Activated CD4-positive, alpha-beta T cell treated with anti-CD3 and anti-CD28 coated beads, Interleukin-2, amount 10 ng/mL, durations not matched to agents 24 days and 14 days (primary cell): ENCODE measurements at regions of chr9 and their contacts with region 1.

Region 1: GRCh38 chr9:35829084-35829763 is at the start of gene TMEM8B:
- DNase-seq: peak; percentile 97
- H3K4me3 Mint-ChIP-seq: peak within 1 kb of the TSS; percentile 93
- H3K27ac Mint-ChIP-seq: peak within 1 kb of the TSS; percentile 86
- H3K4me1 Mint-ChIP-seq: peaks cover 29% of the 10 kb centered on the region
- H3K27me3 Mint-ChIP-seq: peaks cover 6% of the 10 kb centered on the region
- total RNA-seq, gene TMEM8B: 2.0 and 2.3 TPM in 2 replicates

Region 2: GRCh38 chr9:35882263-35882848 is 53.1 kb after region 1 on chr9:
- intact Hi-C with region 1: loop called (anchors 1 kb)
- DNase-seq: peak; percentile 93
- H3K4me3 Mint-ChIP-seq: no peak overlapping the region
- H3K27ac Mint-ChIP-seq: no peak overlapping the region
- H3K4me1 Mint-ChIP-seq: no peaks in the 10 kb centered on the region
- H3K27me3 Mint-ChIP-seq: peaks cover 46% of the 10 kb centered on the region

Region 3: GRCh38 chr9:36543916-36544315 is 714.7 kb after region 1 on chr9:
- intact Hi-C with region 1: no loop called
- DNase-seq: no peak
- H3K4me3 Mint-ChIP-seq: no peak overlapping the region
- H3K27ac Mint-ChIP-seq: no peak overlapping the region
- H3K4me1 Mint-ChIP-seq: peaks cover 6% of the 10 kb centered on the region
- H3K27me3 Mint-ChIP-seq: peaks cover 13% of the 10 kb centered on the region